T-cell (primary cell): ENCODE measurements at regions of chr5 and their contacts with region 1.

Region 1: DNA sequence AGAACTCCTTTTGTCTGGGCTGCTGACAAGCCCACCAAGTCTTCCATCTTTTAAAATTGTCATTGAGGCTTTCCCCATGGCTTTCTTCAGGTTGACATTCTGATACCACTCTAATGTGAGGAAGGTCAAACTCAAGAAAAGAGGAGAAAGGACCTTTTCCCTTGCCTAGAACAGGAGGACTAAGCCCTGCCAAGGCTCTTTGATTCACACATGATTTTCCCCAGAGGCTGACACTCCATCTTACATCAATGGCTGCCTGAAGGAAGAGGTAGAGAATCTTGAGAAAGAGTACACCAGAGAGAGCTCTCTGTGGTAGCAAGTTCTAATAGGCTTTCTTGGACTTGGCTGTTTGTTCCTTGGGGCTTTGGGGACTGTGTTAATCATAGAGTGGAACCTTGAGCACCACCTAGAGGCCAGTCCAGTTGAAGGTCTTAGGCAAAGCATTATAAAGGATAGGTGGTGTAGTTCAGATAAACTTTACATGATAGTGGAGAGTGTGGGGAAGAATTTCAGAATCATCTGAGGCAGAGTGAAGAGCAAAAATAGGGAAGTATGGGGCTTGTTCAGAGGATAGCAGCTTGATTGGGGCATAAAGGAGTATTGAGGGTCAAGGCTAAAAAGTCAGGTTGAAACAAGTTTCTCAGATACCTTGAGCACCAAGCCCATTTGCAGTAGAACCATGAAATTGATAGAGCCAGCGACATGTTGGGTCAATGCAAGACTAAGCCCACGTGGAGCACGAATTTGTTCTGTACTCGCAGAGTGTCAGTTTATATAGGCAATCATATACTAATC is 36.7 kb downstream of the NDFIP1 start:
- DNase-seq: peak in 34 of 35 experiments; percentile 28 to 76 (median 52)
- ATAC-seq: peak; percentile 64 to 86 (median 80)
- H3K4me3 ChIP-seq: no peak overlapping the region
- H3K4me3 Mint-ChIP-seq: no peak overlapping the region
- H3K27ac ChIP-seq: no peak overlapping the region
- H3K27ac Mint-ChIP-seq: no peak overlapping the region
- H3K4me1 ChIP-seq: no peaks in the 10 kb centered on the region
- H3K4me1 Mint-ChIP-seq: peaks cover 0 to 16% (median 7%) of the 10 kb centered on the region in 3 donors
- H3K27me3 ChIP-seq: no peaks in the 10 kb centered on the region
- H3K27me3 Mint-ChIP-seq: no peaks in the 10 kb centered on the region

Region 2: DNA sequence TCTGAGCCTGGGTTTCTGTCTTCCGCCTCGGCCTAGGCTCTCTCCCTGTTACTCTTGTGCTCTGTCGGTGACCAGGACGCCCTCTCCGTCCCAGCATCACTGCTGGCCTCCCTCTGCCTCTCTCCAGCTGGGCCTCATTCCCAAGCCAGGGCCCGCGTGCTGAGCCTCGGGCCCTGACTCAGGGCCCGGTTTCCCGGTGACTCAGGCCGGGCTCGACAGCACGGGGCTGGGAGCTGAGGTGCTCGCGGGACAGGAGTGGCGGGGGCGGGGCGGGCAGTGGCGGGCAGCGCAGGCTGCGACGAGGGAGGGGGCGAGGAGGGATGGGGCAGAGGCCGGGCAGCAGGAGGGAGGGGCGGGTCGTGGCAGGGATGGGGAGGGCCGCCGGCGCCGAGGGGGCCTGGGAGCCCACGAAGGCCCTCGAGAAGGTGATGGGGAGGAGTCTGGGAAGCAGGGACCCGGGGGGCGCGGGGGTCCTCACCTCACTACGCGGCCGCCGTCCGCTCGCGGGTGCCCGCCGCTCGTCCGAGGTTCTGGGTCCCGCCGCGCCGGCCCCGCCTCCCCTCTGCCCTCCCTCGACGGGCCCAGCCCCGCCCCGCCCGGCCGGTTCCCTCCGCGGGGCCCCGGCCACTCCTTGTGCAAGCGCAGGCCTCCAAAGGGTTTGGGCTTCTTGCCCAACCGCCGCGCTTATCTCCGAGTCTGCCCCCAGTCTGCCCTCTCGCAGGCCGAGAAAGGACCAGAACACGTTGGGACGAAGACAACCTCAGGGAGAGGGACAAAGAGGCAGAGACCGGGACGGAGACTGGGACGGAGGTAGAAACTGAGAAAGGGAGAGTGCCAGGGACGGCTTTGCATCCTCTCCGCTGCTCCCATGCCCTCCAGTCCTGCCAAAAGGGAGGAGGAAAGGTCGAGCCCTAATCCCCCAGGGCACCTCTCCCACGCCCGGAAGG is 463.3 kb before region 1 on chr5 and contains the start of gene ARAP3:
- CTCF ChIA-PET with region 1: interaction called in 1 of 2 experiments, 10 read pairs
- POLR2A ChIA-PET with region 1: no interaction called
- DNase-seq: peak in 21 of 35 experiments; percentile 9 to 58 (median 26)
- ATAC-seq: peak; percentile 43 to 67 (median 60)
- H3K4me3 ChIP-seq: peak within 1 kb of the TSS; percentile 53 to 67
- H3K4me3 Mint-ChIP-seq: peak within 1 kb of the TSS; percentile 64 to 83 (median 76)
- H3K27ac ChIP-seq: peak within 1 kb of the TSS; percentile 34
- H3K27ac Mint-ChIP-seq: peak within 1 kb of the TSS; percentile 75 to 89
- H3K4me1 ChIP-seq: peaks cover 14 to 37% of the 10 kb centered on the region in 2 experiments
- H3K4me1 Mint-ChIP-seq: peaks cover 26 to 36% (median 27%) of the 10 kb centered on the region in 3 donors
- H3K27me3 ChIP-seq: peaks cover 0 to under 1% of the 10 kb centered on the region in 2 experiments
- H3K27me3 Mint-ChIP-seq: peaks cover 0 to 3% of the 10 kb centered on the region in 2 donors
- total RNA-seq, gene ARAP3: 1.2 to 25.6 (median 20.5) TPM